ENCODE measurements at regions of chrX and their contacts with region 1.

Region 1: DNA sequence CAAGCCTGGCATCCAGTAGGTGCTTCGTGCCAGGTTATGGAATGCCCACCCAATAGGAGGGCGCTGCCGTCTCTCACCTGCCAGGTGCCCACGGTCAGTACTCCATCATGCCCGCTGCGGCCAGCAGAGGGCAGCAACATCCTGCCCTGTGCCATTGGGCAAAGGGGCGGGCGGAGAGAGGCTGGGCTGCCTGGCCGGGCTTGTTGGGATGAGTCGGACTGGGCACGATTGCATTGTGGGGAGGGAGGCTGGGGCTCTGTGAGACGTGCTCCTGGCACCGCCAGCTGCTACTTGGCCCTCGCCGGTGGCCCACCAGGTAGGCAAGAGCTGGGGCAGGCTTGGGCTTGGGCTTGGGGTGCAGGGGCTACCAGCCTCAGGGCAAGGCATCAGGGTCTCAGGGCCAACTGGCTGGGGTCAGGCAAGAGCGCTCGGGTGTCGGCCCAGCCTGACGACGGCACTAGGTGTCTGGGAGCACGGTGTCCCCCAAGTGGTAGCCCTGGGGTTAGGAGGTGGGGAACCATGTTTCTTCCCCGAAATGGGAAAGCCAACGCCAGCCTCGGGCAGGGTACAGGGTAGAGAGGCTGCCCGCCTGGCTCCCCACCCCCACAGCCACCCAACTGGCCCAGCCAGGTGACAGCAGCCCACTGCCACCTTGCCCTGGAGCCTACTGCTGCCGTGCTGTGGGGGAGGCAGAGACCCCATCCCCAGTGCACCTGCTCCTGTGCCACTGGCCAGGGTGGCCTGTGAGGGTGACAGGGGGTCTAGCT is at the start of gene PLXNB3:
- DNase-seq: peak; percentile 50
- ATAC-seq: peak; percentile 95
- H3K4me3 ChIP-seq: peak within 1 kb of the TSS; percentile 43 to 54
- H3K27ac ChIP-seq: peak within 1 kb of the TSS; percentile 22; the same call in 1 of the 2 replicates
- H3K4me1 ChIP-seq: peaks cover 0 to 10% of the 10 kb centered on the region in 2 experiments; a peak in 2 of 4 replicates
- H3K27me3 ChIP-seq: no peaks in the 10 kb centered on the region
- CTCF ChIP-seq: peak in 2 of 3 experiments; percentile 72 to 80; a peak in 4 of 6 replicates
- POLR2A ChIP-seq: no peak
- RAD21 ChIP-seq: no peak
- total RNA-seq, gene PLXNB3: 4.8 TPM

Region 2: DNA sequence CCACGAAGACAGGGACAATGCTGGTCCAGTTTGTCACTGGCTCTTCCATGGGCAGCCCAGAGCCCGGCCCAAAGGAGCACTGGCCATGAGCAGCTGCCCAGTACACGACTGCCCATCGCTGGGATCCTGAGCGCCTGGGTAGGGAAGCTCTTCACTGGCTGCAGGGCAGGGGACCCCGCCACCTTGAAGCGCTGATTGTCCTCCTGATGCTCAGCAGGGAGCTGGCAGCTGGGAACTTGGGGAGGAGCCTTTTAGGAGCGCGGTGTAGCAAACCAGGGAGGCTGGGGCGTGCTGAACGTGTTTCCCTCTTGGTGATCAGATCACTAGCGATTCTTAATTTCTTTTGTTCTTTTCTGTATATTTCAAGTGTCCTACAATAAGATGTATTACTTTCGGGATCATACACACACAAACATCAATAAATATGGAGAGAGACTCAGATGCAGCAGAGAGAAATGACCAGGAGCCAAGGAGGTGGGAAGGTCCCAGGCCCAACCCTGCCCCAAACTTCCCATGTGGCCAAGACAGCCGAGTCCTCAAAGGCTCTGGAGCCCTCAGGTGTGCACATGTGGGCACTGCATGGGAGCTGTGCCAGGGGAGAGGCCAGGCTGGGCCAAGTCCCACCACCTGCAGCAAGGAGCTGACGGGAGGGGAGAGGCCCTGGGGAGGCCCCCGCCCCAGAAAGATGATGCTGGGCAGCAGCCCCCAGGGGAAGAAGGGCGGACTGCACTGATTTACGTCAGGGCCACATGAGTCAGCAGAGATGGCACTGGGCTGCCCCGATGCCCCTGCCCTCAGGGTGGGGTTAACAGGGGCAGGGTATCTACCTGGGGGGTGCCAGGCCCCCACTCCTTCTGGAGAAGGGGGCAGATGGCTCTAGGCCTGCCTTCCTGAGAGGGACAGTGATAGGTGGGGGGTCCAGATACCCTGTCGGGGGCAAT is 120.2 kb after region 1 on chrX:
- CTCF ChIA-PET with region 1: no interaction called
- POLR2A ChIA-PET with region 1: no interaction called
- RAD21 ChIA-PET with region 1: no interaction called
- intact Hi-C with region 1: loop called (anchors 1 kb)
- DNase-seq: peak; percentile 10
- ATAC-seq: peak; percentile 75
- H3K4me3 ChIP-seq: peak overlapping the region; percentile 47 to 52
- H3K27ac ChIP-seq: no peak overlapping the region
- H3K4me1 ChIP-seq: peaks cover 9 to 37% of the 10 kb centered on the region in 2 experiments
- H3K27me3 ChIP-seq: no peaks in the 10 kb centered on the region
- CTCF ChIP-seq: peak; percentile 47 to 56 (median 54); a peak in 5 of 6 replicates
- POLR2A ChIP-seq: no peak
- RAD21 ChIP-seq: peak; percentile 72

Region 3: DNA sequence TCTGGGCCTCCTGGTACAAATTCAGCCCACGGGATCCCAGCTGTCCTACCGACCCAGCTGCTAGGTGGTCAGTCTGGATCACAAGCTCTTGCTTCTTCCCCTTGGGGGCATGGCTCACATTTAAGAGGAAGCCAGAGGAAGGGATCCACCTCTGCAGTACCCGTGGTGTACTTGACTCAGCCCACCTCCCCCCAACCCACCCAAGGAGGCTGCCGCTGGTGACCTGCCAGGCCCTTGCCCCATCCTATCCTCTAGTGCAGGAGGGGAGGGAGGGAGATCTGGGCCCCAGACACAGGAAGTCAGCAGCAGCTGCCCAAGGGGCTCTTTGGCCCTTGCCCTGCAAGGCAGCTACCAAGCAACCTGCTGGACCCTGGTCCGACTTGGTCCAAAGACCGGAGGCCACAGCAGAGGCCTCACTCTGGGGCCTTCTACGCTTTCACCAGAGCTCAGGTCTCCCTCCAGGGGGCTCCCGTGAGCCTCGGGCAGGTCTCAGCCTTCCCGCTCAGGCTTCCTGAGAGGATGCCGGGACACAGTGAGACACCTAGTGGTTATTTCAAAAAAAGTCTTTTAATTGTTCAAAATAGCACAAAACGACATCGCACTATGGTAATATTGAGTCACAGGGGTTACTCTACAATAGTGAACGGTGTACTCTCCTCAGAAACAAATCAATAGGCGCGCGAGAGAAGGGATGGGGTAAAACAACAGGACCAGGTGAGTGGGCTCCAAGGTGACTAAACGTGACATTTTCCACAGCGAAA is 183.0 kb after region 1 on chrX:
- CTCF ChIA-PET with region 1: interaction called, 8 read pairs
- POLR2A ChIA-PET with region 1: no interaction called
- RAD21 ChIA-PET with region 1: no interaction called
- intact Hi-C with region 1: loop called (anchors 1 kb)
- DNase-seq: peak; percentile 67
- ATAC-seq: peak; percentile 94
- H3K4me3 ChIP-seq: no peak overlapping the region
- H3K27ac ChIP-seq: peak overlapping the region; percentile 38; the same call in 1 of the 2 replicates
- H3K4me1 ChIP-seq: no peaks in the 10 kb centered on the region; a peak in 1 of 4 replicates
- H3K27me3 ChIP-seq: no peaks in the 10 kb centered on the region
- CTCF ChIP-seq: peak in 2 of 3 experiments; percentile 78 to 84; a peak in 4 of 6 replicates
- POLR2A ChIP-seq: no peak
- RAD21 ChIP-seq: no peak

Region 4: GRCh38 chrX:153953342-153953830 is 189.2 kb after region 1 on chrX:
- CTCF ChIA-PET with region 1: no interaction called
- POLR2A ChIA-PET with region 1: no interaction called
- RAD21 ChIA-PET with region 1: no interaction called
- intact Hi-C with region 1: loop called (anchors 2 kb)
- DNase-seq: no peak
- ATAC-seq: peak; percentile 72
- H3K4me3 ChIP-seq: no peak overlapping the region
- H3K27ac ChIP-seq: no peak overlapping the region
- H3K4me1 ChIP-seq: no peaks in the 10 kb centered on the region
- H3K27me3 ChIP-seq: no peaks in the 10 kb centered on the region
- CTCF ChIP-seq: peak in 2 of 3 experiments; percentile 79 to 80; a peak in 4 of 6 replicates
- POLR2A ChIP-seq: no peak
- RAD21 ChIP-seq: no peak

Region 5: DNA sequence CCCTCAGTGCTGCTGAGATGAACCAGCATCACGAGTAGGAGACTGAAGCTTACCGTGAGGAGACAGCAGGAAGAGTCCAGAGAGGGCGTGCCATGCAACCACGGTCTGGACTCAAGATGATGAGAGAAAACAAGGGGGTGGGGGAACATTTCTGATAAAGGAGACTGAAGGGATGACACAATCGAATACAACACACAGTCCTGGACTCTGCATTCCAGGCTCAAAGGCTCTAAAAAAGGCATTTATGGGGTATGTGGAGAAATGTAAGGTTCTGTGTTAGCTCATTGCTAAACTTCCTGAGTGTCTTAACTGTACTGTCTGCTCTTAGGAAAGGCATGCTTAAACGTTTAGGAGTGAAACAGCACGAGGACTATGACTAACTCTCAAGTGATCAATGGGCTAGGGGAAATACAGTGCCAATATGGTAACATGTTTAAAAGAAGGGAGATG is 276.2 kb after region 1 on chrX:
- CTCF ChIA-PET with region 1: no interaction called
- POLR2A ChIA-PET with region 1: no interaction called
- RAD21 ChIA-PET with region 1: no interaction called
- intact Hi-C with region 1: no loop called
- DNase-seq: no peak
- ATAC-seq: no peak
- H3K4me3 ChIP-seq: no peak overlapping the region
- H3K27ac ChIP-seq: no peak overlapping the region
- H3K4me1 ChIP-seq: no peaks in the 10 kb centered on the region
- H3K27me3 ChIP-seq: no peaks in the 10 kb centered on the region
- CTCF ChIP-seq: no peak
- POLR2A ChIP-seq: no peak
- RAD21 ChIP-seq: no peak